Esophagus muscularis mucosa (tissue), 4 donors: ENCODE measurements at regions of chr7 and their contacts with region 1.

Region 1: GRCh38 chr7:103576641-103577040 is 130.6 kb upstream of the SLC26A5 start:
- DNase-seq: no peak
- H3K4me3 ChIP-seq: no peak overlapping the region
- H3K27ac ChIP-seq: no peak overlapping the region
- H3K4me1 ChIP-seq: no peaks in the 10 kb centered on the region
- H3K27me3 ChIP-seq: peaks cover 0 to 8% (median 0%) of the 10 kb centered on the region in 4 donors
- CTCF ChIP-seq: no peak
- EP300 ChIP-seq: no peak
- POLR2A ChIP-seq: no peak

Region 2: GRCh38 chr7:103811997-103812396 is 235.4 kb after region 1 on chr7:
- intact Hi-C with region 1: no loop called
- DNase-seq: no peak
- H3K4me3 ChIP-seq: no peak overlapping the region
- H3K27ac ChIP-seq: no peak overlapping the region
- H3K4me1 ChIP-seq: no peaks in the 10 kb centered on the region
- H3K27me3 ChIP-seq: no peaks in the 10 kb centered on the region
- CTCF ChIP-seq: no peak
- EP300 ChIP-seq: no peak
- POLR2A ChIP-seq: no peak

Region 3: DNA sequence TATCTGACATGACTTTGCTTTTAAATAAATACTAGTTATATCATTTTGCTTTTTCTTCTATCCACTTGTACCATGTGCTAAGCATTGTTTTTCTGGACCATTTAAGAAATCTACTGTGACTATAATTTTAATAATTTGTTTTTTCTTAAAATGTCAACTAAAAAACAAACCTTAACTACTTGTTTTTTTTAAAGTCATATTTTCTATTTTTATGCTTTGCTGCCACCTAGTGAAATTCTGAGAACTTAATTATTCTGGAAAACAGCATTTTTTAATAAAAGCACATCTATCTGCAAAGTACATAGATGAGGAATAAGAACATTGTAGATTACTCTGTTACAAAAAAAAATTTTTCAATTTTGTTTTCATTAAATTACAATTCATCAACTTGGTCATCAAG is 583.7 kb after region 1 on chr7:
- intact Hi-C with region 1: loop called (anchors 5 kb)
- DNase-seq: no peak
- H3K4me3 ChIP-seq: no peak overlapping the region
- H3K27ac ChIP-seq: no peak overlapping the region
- H3K4me1 ChIP-seq: peaks cover 0 to 5% (median 0%) of the 10 kb centered on the region in 4 donors
- H3K27me3 ChIP-seq: no peaks in the 10 kb centered on the region
- CTCF ChIP-seq: peak in 2 of 3 experiments; percentile 28 to 34
- EP300 ChIP-seq: no peak
- POLR2A ChIP-seq: no peak